Transverse colon (tissue), 4 donors: ENCODE measurements at regions of chr10 and their contacts with region 1.

Region 1: GRCh38 chr10:117174439-117175214 is 22.7 kb upstream of the KCNK18 start:
- DNase-seq: peak; percentile 90
- H3K4me3 ChIP-seq: peak overlapping the region; percentile 18 to 46 (median 36)
- H3K27ac ChIP-seq: no peak overlapping the region
- H3K4me1 ChIP-seq: peaks cover 0 to 16% (median 8%) of the 10 kb centered on the region in 4 donors
- H3K27me3 ChIP-seq: peaks cover 57% of the 10 kb centered on the region
- CTCF ChIP-seq: peak; percentile 78 to 87 (median 84)
- EP300 ChIP-seq: no peak
- POLR2A ChIP-seq: no peak

Region 2: GRCh38 chr10:116654816-116655215 is 519.8 kb before region 1 on chr10:
- in situ Hi-C with region 1: loop called in 1 of 4 experiments (anchors 25 kb)
- intact Hi-C with region 1: no loop called
- DNase-seq: no peak
- H3K4me3 ChIP-seq: no peak overlapping the region
- H3K27ac ChIP-seq: no peak overlapping the region
- H3K4me1 ChIP-seq: no peaks in the 10 kb centered on the region
- H3K27me3 ChIP-seq: no peaks in the 10 kb centered on the region
- CTCF ChIP-seq: peak in 2 of 5 experiments; percentile 7 to 13
- EP300 ChIP-seq: no peak
- POLR2A ChIP-seq: no peak

Region 3: DNA sequence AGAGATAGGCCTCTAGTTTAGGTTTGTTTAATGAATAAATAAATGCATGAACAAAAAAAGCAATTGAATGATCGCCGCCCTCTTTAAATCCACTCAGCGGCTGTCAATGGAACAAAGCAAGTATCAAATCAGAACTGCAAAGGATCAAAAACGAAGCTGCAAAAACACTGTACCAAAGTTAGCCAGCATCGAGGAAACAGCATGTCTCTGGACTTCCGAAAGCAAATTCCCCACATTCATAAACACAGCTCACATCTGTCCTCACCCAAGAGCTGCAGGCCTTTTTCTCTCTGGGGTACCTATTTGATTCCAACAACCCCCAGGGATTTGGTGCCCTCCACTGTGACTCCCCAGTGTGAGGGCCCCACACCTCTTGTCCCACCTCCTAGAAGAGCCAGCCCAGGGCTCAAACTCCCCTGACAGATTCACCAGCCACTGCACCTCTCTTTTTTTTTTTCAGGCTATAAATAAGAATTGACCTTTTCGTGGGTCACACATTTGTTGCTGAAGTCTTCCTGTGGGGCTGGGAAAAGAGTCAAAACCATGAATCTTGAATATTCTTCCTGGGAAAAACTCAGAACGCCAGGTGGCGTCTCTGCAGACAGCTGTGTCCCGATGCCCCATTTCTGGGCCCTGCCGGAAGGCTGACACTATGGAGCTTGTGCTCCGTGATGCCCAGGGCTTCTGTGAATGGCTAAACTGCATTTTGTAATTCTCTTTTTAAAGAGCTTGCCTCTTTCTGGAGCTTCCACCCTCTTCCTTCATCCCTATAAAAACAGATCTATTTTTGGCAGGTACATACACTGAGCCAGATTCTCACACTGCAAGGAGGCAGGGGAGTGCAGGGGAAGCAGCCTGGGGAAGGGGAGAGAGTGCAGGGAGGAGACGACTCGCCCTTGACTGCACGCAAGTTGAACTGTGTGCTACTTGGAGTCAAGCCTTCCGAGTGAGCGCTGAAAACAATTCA is 484.0 kb before region 1 on chr10:
- in situ Hi-C with region 1: loop called in 1 of 4 experiments (anchors 25 kb)
- intact Hi-C with region 1: no loop called
- DNase-seq: no peak
- H3K4me3 ChIP-seq: no peak overlapping the region
- H3K27ac ChIP-seq: peak overlapping the region in 1 of 4 donors; percentile 14
- H3K4me1 ChIP-seq: peaks cover 0 to 12% (median 0%) of the 10 kb centered on the region in 4 donors
- H3K27me3 ChIP-seq: no peaks in the 10 kb centered on the region
- CTCF ChIP-seq: peak in 3 of 5 experiments; percentile 11 to 19 (median 17)
- EP300 ChIP-seq: no peak
- POLR2A ChIP-seq: no peak

Region 4: DNA sequence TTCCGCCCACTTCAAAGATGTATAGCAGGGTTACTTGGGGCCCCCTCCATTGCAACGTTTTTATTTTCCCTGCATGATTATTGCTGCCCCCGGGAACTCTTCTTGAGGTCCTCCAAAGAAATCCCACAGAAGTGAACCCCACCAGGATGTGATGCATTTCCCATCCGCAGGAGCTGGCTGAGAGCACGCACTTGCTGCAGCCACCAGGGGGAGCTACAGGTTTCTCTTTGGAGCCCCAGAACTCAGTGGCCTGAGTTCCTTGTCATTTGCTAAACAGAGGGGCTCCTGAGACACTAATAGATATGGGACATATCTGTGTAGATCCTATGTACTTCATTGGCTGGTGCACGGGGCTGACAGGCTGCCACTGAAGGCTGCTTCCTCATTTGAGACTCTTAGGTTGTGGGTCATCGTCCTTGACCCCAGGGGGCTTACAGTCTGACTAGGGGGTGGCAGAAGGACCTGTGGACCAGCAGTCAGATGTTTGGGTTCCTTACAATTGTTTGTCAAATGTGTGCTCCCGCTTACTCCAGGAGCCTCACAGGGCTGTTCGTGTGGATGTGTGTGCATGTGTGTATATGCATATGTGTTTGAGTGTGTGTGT is 377.6 kb before region 1 on chr10:
- in situ Hi-C with region 1: loop called (anchors 5 to 10 kb)
- intact Hi-C with region 1: loop called (anchors 2 kb)
- DNase-seq: peak; percentile 76
- H3K4me3 ChIP-seq: no peak overlapping the region
- H3K27ac ChIP-seq: no peak overlapping the region
- H3K4me1 ChIP-seq: no peaks in the 10 kb centered on the region
- H3K27me3 ChIP-seq: peaks cover 15% of the 10 kb centered on the region
- CTCF ChIP-seq: peak; percentile 87 to 90 (median 89)
- EP300 ChIP-seq: no peak
- POLR2A ChIP-seq: no peak

Region 5: GRCh38 chr10:116809483-116810119 is 365.0 kb before region 1 on chr10:
- in situ Hi-C with region 1: loop called in 1 of 4 experiments (anchors 10 kb)
- intact Hi-C with region 1: no loop called
- DNase-seq: peak; percentile 27
- H3K4me3 ChIP-seq: no peak overlapping the region
- H3K27ac ChIP-seq: no peak overlapping the region
- H3K4me1 ChIP-seq: peaks cover 0 to 10% (median 2%) of the 10 kb centered on the region in 4 donors
- H3K27me3 ChIP-seq: peaks cover 43% of the 10 kb centered on the region
- CTCF ChIP-seq: peak; percentile 26 to 50 (median 42)
- EP300 ChIP-seq: no peak
- POLR2A ChIP-seq: no peak